RWPE1 (cell line): ENCODE measurements at regions of chr1 and their contacts with region 1.

Region 1: DNA sequence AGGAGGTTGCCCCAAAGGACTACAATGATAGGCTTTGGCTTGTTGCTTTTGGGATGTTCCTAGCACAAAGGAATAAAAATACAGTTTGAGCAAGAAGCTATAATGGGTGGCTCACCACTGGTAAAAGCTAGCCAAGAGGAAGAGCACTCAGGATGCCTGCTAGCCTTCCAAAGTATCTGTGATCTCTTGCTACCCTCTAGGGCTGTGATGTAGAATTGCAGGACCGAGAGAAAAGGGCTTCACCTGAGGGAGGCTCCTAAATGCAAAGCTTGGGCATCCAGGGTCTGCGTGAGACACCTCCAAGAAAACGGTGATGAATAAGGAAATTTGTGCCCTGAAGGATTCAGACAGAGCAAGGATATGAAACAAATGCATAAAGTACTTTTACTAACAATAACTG is 17.7 kb downstream of the IVL start:
- DNase-seq: peak; percentile 63
- H3K27ac ChIP-seq: no peak overlapping the region
- CTCF ChIP-seq: peak; percentile 33; the same call in 1 of the 2 replicates

Region 2: DNA sequence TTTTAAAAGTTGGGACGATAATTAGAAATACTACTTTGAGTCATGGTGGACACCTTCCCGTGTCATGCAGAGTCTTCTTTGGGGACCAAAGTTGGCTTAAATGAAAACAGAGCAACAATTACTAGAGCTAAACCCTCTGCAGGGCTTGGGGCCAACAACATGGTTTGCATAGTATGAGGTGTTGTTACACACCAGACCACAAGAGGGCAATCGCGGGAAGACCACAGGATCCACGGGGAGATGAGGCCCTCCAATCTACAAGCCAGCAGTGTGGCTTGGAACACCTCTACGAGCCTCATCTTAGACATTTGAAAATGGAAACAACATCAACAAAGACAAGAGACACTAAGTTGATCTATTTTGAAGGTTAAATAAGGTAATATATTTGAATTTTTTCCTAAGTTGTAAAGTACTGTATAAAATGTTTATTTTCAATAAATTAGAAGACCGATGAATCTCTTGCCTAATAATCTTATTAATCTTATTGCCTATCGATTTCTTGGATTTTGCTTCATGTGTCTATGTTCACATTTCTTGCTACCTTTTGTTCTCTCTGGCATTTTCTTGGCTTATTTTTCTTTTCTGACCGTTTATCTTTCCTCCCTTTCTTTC is 56.2 kb before region 1 on chr1:
- CTCF ChIA-PET with region 1: interaction called, 37 read pairs
- POLR2A ChIA-PET with region 1: no interaction called
- DNase-seq: peak; percentile 78
- H3K27ac ChIP-seq: no peak overlapping the region
- CTCF ChIP-seq: peak; percentile 86